ENCODE measurements at regions of chr7 and their contacts with region 1.

Region 1: DNA sequence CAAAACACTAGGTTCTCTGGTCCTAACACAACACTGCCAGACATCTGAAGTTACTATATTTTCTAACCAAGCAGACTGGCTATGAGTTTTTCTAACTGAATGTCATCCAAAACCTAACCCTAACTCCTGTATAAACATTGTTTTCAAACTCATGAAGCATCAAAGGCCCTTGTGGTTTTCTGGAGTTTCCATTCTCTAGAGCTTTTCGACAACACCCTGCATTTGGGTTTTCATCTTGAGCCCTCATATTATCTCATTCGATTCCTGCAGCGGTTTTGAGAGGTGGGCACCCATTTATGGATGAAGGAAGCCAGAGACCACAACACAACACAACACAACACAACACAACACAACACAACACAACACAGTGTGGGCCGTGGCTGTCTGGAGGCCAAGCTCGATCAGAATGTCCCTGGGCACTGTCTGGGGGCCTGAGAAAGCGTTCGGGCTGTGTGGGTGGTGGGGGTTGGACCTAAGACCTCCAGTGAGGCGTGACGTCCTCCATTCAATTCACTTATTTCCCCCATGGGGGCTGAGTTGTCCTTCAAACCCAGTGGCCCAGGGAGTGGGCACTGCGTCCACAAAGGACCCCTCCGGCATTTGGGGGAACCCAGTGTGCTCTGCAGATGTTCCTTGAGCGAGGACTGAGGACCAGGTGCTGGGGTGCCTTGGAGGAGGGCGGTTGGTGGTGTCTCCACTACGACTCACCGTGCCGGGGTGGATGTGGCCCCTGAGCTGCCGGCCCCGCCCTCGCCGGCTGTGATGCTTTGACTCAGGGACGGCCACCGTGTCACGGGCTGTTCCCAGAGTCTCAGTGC is 490.4 kb downstream of the DNAJB6 start:
- DNase-seq: peak in 4 of 5 donors; percentile 20 to 38 (median 25)
- H3K4me3 ChIP-seq: no peak overlapping the region
- H3K4me3 Mint-ChIP-seq: peak overlapping the region; percentile 5 to 80 (median 62)
- H3K27ac ChIP-seq: no peak overlapping the region
- H3K27ac Mint-ChIP-seq: peak overlapping the region; percentile 24 to 86 (median 68)
- H3K4me1 ChIP-seq: peaks cover 33% of the 10 kb centered on the region
- H3K4me1 Mint-ChIP-seq: peaks cover 7 to 25% (median 15%) of the 10 kb centered on the region in 4 donors
- H3K27me3 ChIP-seq: no peaks in the 10 kb centered on the region
- H3K27me3 Mint-ChIP-seq: no peaks in the 10 kb centered on the region

Region 2: GRCh38 chr7:157851501-157852067 is 24.3 kb after region 1 on chr7:
- CTCF ChIA-PET with region 1: no interaction called
- POLR2A ChIA-PET with region 1: interaction called, 27 read pairs
- intact Hi-C with region 1: loop called (anchors 2 kb)
- DNase-seq: peak; percentile 63 to 74 (median 71)
- H3K4me3 ChIP-seq: peak overlapping the region; percentile 27 to 42
- H3K4me3 Mint-ChIP-seq: peak overlapping the region; percentile 77 to 92 (median 82)
- H3K27ac ChIP-seq: peak overlapping the region; percentile 25
- H3K27ac Mint-ChIP-seq: peak overlapping the region; percentile 82 to 95 (median 93)
- H3K4me1 ChIP-seq: peaks cover 18% of the 10 kb centered on the region
- H3K4me1 Mint-ChIP-seq: peaks cover 5 to 16% (median 8%) of the 10 kb centered on the region in 4 donors
- H3K27me3 ChIP-seq: no peaks in the 10 kb centered on the region
- H3K27me3 Mint-ChIP-seq: no peaks in the 10 kb centered on the region